Tibial artery (tissue), 4 donors: ENCODE measurements at regions of chr16 and their contacts with region 1.

Region 1: DNA sequence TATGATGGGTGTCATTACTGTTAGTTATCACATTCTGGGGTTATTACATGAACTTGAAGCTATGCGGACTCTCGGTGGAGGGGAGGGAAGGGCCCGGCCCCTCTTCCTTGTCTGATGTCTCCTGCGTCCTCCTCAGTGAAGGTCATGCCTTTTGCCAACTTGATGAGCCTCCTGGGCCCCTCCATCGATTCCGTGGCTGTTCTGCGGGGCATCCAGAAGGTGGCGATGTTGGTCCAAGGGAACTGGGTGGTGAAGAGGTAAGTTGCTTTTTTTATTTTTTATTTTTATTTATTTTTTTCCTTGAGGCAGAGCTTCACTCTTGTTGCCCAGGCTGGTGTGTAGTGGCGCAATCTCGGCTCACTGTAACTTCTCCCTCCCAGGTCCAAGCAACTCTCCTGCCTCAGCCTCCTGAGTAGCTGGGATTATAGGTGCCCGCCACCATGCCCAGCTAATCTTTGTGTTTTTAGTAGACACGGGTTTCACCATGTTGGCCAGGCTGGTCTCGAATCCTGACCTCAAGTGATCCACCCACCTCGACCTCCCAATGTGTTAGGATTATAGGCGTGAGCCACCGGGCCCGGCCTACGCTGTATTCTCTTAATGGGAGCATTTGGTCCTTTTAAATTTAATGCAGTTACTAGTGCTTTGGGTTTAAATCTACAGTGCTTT is 21.6 kb downstream of the POLR3E start:
- DNase-seq: no peak
- H3K4me3 ChIP-seq: no peak overlapping the region
- H3K27ac ChIP-seq: no peak overlapping the region
- H3K4me1 ChIP-seq: no peaks in the 10 kb centered on the region
- H3K27me3 ChIP-seq: no peaks in the 10 kb centered on the region
- CTCF ChIP-seq: peak; percentile 34 to 38

Region 2: DNA sequence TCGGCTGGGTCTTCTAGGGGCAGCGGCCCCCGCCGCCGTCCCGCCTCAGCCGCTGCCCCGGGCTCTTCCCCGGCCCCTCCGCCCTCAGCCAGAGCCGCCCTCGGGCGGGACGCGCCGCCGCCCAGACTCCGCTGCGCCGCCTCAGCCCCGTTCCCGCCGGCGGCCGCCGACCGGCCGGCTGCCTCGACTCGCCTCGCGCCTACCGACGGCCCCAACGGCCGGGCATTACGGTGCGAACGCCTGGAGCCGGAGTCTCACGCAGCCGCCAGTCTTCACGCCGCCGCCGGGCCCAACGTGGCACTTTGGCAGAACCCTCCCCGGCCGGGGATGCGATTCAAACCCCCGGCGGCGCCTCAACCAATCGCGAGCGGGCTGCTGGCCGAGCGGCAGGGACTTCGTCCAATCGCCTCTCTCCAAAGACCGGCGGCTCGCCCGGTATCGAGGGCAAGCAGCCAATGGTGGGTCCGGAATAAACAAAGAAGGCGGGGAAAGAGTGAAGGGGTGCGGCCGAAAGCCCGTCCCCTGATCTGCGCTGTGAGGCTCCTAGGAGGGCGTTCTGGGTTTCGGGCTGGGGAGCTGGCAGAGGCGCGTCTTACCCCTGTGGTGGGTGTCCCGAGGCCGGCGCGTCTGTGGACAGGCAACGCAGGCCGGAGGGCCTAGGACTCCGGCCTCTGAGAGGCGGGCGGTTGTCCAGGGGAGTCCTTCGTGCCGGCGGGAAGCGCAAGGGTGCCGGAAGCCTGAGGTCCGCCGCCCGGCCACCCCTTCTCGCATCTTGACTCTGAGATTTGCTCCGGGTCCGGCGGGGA is 55.7 kb after region 1 on chr16 and contains the start of gene CDR2:
- intact Hi-C with region 1: loop called (anchors 10 kb)
- DNase-seq: peak; percentile 98 to 99
- H3K4me3 ChIP-seq: peak within 1 kb of the TSS; percentile 79 to 92
- H3K27ac ChIP-seq: peak within 1 kb of the TSS; percentile 91 to 93
- H3K4me1 ChIP-seq: peaks cover 0 to 42% (median 31%) of the 10 kb centered on the region in 4 donors
- H3K27me3 ChIP-seq: no peaks in the 10 kb centered on the region
- CTCF ChIP-seq: peak in 1 of 2 experiments; percentile 5

Region 3: GRCh38 chr16:22386976-22387375 is 68.2 kb after region 1 on chr16:
- intact Hi-C with region 1: no loop called
- DNase-seq: no peak
- H3K4me3 ChIP-seq: no peak overlapping the region
- H3K27ac ChIP-seq: peak overlapping the region; percentile 29 to 38
- H3K4me1 ChIP-seq: peaks cover 0 to 13% (median 2%) of the 10 kb centered on the region in 4 donors
- H3K27me3 ChIP-seq: no peaks in the 10 kb centered on the region
- CTCF ChIP-seq: no peak